ENCODE measurements at regions of chr2 and their contacts with region 1.

Region 1: DNA sequence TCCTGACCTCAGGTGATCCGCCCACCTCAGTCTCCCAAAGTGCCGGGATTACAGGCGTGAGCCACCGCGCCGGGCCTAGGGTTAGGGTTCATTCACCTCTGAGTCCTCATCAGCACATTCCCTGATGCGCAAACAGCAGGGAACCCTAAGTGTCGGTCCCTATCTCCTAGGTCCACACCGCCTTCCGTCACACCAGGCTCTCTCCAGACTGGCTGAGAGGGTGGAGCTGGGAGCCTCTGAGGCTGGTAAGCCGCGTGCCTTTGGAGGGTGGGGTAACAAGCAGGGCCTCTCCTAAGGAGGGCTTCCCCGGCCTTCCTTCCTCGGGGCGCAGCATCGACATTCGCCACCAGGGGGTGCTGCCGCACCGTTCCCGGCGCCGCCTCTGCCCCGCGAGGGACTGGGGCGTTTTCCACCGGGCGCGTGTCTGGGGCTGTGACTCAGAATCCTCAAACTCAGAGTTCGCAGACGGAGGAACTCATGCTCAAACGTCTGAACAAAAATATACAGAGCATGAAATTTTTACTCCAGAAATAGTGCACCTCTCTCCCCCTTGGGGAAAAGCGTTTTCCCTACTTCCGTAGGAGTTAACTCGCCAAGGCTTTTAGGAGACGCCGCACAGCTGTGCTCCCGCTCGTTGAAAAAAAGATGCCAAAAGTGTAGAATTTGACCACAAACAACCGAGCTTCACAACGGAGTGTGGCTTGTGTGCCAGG is 63.9 kb upstream of the ASAP2 start:
- ATAC-seq: peak; percentile 85 to 96 (median 90)
- H3K4me3 ChIP-seq: peak overlapping the region in 4 of 5 donors; percentile 3 to 11 (median 4)
- H3K27ac ChIP-seq: no peak overlapping the region
- H3K4me1 ChIP-seq: peaks cover 10 to 14% of the 10 kb centered on the region in 2 donors

Region 2: GRCh38 chr2:8872821-8873432 is 269.8 kb before region 1 on chr2:
- in situ Hi-C with region 1: loop called in 3 of 9 experiments (anchors 25 kb)
- ATAC-seq: peak in 4 of 8 experiments; percentile 32 to 44 (median 36)
- H3K4me3 ChIP-seq: no peak overlapping the region
- H3K27ac ChIP-seq: no peak overlapping the region
- H3K4me1 ChIP-seq: no peaks in the 10 kb centered on the region

Region 3: DNA sequence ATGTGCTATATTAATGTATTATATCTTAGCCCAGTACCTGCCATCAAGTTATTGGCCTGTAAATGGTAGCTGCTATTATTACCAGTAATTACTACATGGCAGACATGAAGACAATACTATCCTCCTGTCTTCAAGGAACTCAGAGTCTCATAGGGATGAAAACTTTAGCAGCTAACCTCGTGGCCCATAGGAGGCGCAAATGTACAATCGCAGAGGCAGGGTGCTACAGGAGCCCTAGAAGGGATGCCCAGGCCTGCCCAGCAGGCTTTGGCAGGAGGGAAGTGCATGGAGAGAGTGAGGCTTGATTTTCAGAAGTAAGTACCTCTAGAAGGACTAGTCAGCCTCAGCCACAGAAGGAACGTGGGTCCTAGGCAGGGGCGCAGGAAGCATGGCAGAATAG is 260.6 kb before region 1 on chr2:
- in situ Hi-C with region 1: loop called in 1 of 9 experiments (anchors 25 kb)
- ATAC-seq: peak in 3 of 8 experiments; percentile 36 to 73 (median 42)
- H3K4me3 ChIP-seq: no peak overlapping the region
- H3K27ac ChIP-seq: no peak overlapping the region
- H3K4me1 ChIP-seq: no peaks in the 10 kb centered on the region

Region 4: DNA sequence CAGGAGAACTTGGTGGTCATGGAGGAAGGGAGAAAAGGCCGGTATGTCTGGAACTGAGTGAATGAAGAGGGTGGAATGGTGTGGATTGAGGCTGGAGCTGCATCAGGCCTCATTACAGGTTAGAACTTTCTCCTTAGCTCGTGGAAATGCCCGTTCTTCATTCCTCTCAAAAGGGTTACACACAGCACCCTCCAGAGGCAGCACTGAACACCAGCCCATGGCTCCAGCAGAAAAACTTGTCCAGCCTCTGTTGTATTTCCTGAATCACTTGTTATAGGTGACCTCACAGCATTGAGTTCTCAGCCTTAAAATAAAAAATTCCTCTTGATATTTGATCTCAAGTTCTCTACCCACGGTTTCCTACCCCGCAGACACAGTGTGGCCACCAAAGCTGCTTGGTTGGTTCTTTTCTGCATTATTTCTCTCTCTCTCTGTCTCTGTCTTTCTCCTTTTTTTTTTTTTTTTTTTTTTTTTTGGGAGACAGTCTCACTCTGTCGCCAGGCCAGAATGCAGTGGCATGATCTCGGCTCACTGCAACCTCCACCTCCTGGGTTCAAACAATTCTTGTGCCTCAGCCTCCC is 191.0 kb after region 1 on chr2:
- in situ Hi-C with region 1: loop called in 1 of 9 experiments (anchors 25 kb)
- ATAC-seq: peak; percentile 56 to 95 (median 72)
- H3K4me3 ChIP-seq: no peak overlapping the region
- H3K27ac ChIP-seq: no peak overlapping the region
- H3K4me1 ChIP-seq: peaks cover 0 to 9% of the 10 kb centered on the region in 2 donors

Region 5: GRCh38 chr2:10119027-10119325 is 976.3 kb after region 1 on chr2:
- in situ Hi-C with region 1: no loop called
- ATAC-seq: no peak
- H3K4me3 ChIP-seq: no peak overlapping the region
- H3K27ac ChIP-seq: no peak overlapping the region
- H3K4me1 ChIP-seq: peaks cover 0 to 10% of the 10 kb centered on the region in 2 donors